Activated CD8-positive, alpha-beta T cell treated with anti-CD3 and anti-CD28 coated beads for 36 hours (primary cell): ENCODE measurements at regions of chr2 and their contacts with region 1.

Region 1: DNA sequence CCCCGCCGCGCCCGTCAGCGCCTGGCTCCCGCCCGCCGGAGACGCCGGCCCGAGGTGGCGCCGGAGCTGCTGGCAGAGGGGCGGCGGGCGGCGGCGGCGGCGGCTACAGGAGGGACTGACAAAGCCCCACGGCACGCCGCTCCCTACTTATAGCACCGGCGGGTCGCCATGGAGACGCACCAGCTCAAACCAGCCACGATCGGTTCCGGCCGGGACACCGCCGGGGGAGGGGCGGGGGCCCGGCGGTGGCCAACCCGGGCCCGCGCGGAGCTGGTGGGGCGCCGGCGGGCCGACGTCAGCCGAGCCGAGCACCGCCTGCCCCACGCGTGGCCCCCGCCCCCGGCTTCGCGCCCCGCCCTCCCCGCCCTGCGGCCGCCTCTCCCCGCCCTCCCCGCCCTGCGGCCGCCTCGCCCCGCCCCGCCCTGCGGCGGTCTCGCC is at the start of gene ODC1:
- DNase-seq: peak; percentile 95
- ATAC-seq: peak; percentile 76
- H3K4me3 Mint-ChIP-seq: peak within 1 kb of the TSS; percentile 81
- H3K27ac Mint-ChIP-seq: peak within 1 kb of the TSS; percentile 94
- H3K4me1 Mint-ChIP-seq: peaks cover 47% of the 10 kb centered on the region
- H3K27me3 Mint-ChIP-seq: no peaks in the 10 kb centered on the region
- CTCF ChIP-seq: no peak
- total RNA-seq, gene ODC1: 180 to 181 TPM

Region 2: DNA sequence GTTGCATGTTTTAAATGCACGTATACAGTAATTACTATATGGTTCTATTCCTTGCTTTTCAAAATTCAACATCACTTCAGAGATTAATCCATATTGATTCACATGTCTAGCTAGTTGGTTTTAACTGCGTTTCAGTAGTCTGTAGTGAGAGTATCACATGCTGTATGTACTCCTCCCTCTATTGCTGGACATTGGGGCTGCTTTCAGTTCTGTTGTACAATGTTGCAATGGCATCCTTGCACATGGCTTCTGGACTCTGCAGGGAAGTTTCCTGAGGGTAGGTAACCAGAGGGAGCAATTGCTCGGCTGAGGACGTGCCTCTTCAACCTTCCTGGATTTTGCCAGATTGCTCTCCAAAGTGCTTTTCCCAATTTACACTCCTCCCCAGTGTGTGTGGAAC is 156.2 kb before region 1 on chr2:
- CTCF ChIA-PET with region 1: no interaction called
- POLR2A ChIA-PET with region 1: no interaction called
- intact Hi-C with region 1: no loop called
- DNase-seq: no peak
- ATAC-seq: no peak
- H3K4me3 Mint-ChIP-seq: no peak overlapping the region
- H3K27ac Mint-ChIP-seq: no peak overlapping the region
- H3K4me1 Mint-ChIP-seq: peaks cover 4% of the 10 kb centered on the region
- H3K27me3 Mint-ChIP-seq: no peaks in the 10 kb centered on the region
- CTCF ChIP-seq: no peak

Region 3: GRCh38 chr2:10302479-10303180 is 145.6 kb before region 1 on chr2 and contains the start of gene HPCAL1:
- CTCF ChIA-PET with region 1: interaction called, 13 read pairs
- POLR2A ChIA-PET with region 1: interaction called, 3 read pairs
- intact Hi-C with region 1: no loop called
- DNase-seq: peak; percentile 89
- ATAC-seq: peak; percentile 81
- H3K4me3 Mint-ChIP-seq: peak within 1 kb of the TSS; percentile 96
- H3K27ac Mint-ChIP-seq: peak within 1 kb of the TSS; percentile 89
- H3K4me1 Mint-ChIP-seq: peaks cover 68% of the 10 kb centered on the region
- H3K27me3 Mint-ChIP-seq: no peaks in the 10 kb centered on the region
- CTCF ChIP-seq: peak; percentile 73
- total RNA-seq, gene HPCAL1: 166 to 170 TPM

Region 4: DNA sequence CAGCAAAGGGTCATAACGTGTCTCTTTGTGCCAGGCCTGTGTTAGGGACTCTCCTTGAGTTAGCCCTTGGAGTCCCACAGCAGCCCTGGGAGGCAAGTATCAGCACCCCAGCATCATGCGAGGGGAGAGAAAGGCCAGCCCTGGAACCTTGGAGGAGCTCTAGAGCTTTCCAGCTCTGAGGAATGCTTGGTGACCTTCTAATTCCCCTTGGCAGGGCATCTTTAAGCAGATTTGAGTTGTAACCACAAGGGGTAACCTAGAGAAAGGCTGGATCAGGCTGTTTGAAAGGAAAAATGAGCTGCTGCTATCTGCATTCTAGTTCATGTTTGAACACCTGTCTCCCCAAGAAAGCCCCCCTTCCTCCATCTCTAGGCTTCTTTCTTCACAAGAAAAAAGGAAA is 23.7 kb after region 1 on chr2:
- CTCF ChIA-PET with region 1: no interaction called
- POLR2A ChIA-PET with region 1: interaction called, 11 read pairs
- intact Hi-C with region 1: no loop called
- DNase-seq: no peak
- ATAC-seq: no peak
- H3K4me3 Mint-ChIP-seq: no peak overlapping the region
- H3K27ac Mint-ChIP-seq: no peak overlapping the region
- H3K4me1 Mint-ChIP-seq: peaks cover 3% of the 10 kb centered on the region
- H3K27me3 Mint-ChIP-seq: no peaks in the 10 kb centered on the region
- CTCF ChIP-seq: no peak

Region 5: DNA sequence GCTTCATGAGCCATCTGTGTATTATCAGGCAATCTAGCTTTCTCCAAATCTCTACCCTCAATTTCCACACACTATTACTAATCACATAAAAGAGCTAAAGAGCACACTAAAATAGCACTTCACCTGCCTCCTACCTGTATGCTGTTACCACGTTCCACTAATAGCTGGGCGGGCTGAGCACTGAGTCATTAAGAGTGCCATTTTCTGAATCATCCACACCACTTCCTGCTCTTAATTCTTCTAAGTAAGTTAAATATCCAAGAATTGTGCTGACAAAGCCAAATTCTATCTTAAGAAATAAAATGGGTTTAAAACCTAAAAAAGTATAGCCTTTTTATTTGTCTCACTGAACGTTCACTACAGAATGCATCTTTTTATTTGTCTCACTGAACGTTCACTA is 205.8 kb after region 1 on chr2:
- CTCF ChIA-PET with region 1: interaction called, 5 read pairs
- POLR2A ChIA-PET with region 1: interaction called, 16 read pairs
- intact Hi-C with region 1: loop called (anchors 5 kb)
- DNase-seq: peak; percentile 86
- ATAC-seq: peak; percentile 96
- H3K4me3 Mint-ChIP-seq: peak overlapping the region; percentile 3
- H3K27ac Mint-ChIP-seq: peak overlapping the region; percentile 76
- H3K4me1 Mint-ChIP-seq: peaks cover 50% of the 10 kb centered on the region
- H3K27me3 Mint-ChIP-seq: no peaks in the 10 kb centered on the region
- CTCF ChIP-seq: no peak

Region 6: GRCh38 chr2:10659898-10660568 is 211.8 kb after region 1 on chr2:
- CTCF ChIA-PET with region 1: interaction called, 5 read pairs
- POLR2A ChIA-PET with region 1: interaction called, 16 read pairs
- intact Hi-C with region 1: loop called (anchors 5 kb)
- DNase-seq: peak; percentile 68
- ATAC-seq: peak; percentile 87
- H3K4me3 Mint-ChIP-seq: no peak overlapping the region
- H3K27ac Mint-ChIP-seq: no peak overlapping the region
- H3K4me1 Mint-ChIP-seq: peaks cover 22% of the 10 kb centered on the region
- H3K27me3 Mint-ChIP-seq: no peaks in the 10 kb centered on the region
- CTCF ChIP-seq: peak; percentile 77